ENCODE measurements at regions of chr15 and their contacts with region 1.

Region 1: DNA sequence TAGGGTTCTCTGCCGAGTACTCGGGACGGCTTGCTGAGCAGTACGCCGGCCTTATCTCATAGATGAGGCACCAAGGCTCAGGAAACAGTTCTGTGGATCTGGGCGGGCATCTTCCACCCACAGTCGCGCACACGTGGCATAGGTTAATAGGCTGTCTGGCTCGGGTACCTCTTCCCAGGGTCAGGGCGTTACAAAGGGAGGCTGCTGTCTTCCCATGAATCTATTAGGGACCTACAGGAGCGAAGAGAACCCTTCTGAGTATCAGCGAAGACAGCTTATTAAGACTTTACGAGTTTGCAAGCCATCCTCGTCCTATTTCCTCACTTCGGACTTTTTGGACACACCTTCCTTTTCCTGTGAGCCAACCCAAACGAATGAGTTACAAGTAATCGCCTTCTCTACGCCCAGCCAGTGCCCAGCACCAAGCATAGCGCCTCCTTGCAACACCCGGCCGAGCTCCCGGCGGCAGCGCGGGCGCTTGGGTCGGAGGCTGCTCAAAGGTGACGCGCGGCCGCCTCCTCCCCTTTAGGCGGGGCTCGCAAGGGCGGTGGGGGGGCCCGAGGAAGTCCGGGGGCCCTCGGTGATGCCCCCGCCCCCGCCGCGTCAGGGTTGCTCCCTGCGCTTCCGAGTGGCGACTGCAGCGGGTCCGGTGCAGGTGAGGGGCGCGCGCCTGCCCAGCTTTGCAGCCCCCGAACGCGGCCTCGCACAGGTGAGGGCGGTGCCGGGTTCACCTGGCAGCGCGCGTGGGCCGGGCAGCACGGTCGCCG is at the start of gene MCTP2:
- DNase-seq: peak; percentile 96
- H3K4me3 Mint-ChIP-seq: peak within 1 kb of the TSS; percentile 89
- H3K27ac Mint-ChIP-seq: peak within 1 kb of the TSS; percentile 97
- H3K4me1 Mint-ChIP-seq: peaks cover 69% of the 10 kb centered on the region
- H3K27me3 Mint-ChIP-seq: no peaks in the 10 kb centered on the region
- total RNA-seq, gene MCTP2: 49.8 and 58.9 TPM in 2 replicates

Region 2: DNA sequence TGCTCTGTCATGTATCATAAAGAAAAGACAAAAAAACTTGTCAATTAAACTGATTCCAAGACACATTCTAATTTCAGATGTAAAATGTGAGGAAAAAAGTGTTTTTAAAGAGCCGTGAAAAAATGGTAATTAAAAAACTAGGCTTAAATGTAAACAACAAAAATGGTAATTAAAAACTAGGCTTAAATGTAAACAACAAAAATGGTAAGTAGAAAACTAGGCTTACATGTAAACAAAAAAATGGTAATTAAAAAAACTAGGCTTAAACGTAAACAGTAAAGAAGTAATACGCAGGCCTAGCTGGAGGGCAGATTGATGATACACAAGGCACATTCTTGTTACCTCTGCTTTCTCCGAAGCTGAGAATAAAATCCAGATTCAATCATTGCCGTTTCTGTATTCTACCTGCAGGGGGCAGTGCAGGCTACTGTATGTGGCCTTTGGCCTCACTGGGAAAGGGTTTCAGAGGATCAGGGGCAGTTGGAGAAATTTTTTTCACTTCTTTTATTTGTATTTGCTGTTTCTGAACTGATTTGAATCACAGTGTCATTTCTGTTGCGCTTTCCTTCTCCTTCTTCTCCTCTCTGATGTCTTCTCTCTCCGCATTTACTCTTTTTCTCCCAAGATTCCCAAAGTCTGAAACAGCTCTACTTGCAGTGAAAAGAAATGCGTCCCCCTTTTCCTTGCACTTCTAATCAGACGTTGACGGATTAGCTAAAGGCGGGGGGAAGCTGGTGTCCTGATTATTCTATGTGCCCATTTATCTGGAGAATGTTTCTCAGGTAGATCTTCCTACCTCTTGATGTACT is 66.9 kb before region 1 on chr15:
- intact Hi-C with region 1: no loop called
- DNase-seq: peak; percentile 90
- H3K4me3 Mint-ChIP-seq: no peak overlapping the region
- H3K27ac Mint-ChIP-seq: no peak overlapping the region
- H3K4me1 Mint-ChIP-seq: peaks cover 5% of the 10 kb centered on the region
- H3K27me3 Mint-ChIP-seq: peaks cover 28% of the 10 kb centered on the region

Region 3: DNA sequence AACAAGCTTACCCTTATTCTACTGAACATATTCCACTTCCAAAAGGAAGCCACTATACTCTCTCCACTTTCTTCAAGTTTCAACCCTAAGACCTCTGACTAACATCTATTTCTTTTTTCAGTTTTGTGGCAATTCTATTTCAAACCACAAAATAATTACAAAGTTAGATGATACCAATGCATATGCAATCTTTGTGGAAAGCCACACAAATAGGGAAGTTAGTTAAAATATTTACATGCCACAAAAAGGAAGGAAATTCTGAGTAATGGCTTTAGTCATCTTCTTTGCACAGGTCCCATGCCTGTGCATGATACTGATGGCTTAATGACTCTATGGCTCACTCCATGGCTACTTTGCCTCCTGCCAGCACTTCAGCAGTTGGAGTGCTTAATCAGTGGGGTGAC is 56.7 kb before region 1 on chr15:
- intact Hi-C with region 1: loop called (anchors 1 kb)
- DNase-seq: peak; percentile 66
- H3K4me3 Mint-ChIP-seq: peak overlapping the region; percentile 28
- H3K27ac Mint-ChIP-seq: peak overlapping the region; percentile 8
- H3K4me1 Mint-ChIP-seq: peaks cover 39% of the 10 kb centered on the region
- H3K27me3 Mint-ChIP-seq: no peaks in the 10 kb centered on the region

Region 4: DNA sequence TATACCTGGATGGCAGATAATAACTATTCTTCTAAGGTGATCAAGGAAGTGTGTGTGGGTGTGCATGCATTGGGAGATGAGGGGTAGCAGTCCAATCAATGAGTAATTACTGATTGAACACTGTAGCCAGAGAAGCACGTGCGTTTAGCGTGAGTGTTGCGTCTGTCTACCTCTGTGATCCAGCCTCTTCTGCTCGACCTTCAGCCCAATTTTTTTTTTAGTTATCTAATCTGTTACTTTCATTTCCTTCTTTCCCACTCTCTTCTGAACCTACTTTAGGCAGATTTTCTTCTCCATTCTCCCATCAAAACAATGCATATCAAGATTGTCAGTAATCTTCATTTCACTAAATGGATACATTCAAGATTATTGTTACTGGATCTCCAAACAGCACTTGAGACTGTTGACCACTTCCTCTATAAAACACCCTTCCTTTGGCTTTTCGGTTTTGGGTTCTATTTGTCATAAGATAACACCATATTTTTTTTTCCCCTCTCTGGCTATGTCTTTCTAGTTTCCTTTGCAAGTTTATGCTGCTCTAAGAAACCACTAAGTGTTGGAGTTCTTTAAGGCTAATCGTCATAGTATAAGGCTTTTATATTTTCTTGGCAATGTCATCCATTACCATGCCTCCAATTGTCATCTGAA is 41.2 kb after region 1 on chr15:
- intact Hi-C with region 1: loop called (anchors 1 kb)
- DNase-seq: no peak
- H3K4me3 Mint-ChIP-seq: no peak overlapping the region
- H3K27ac Mint-ChIP-seq: no peak overlapping the region
- H3K4me1 Mint-ChIP-seq: peaks cover 17% of the 10 kb centered on the region
- H3K27me3 Mint-ChIP-seq: no peaks in the 10 kb centered on the region

Region 5: DNA sequence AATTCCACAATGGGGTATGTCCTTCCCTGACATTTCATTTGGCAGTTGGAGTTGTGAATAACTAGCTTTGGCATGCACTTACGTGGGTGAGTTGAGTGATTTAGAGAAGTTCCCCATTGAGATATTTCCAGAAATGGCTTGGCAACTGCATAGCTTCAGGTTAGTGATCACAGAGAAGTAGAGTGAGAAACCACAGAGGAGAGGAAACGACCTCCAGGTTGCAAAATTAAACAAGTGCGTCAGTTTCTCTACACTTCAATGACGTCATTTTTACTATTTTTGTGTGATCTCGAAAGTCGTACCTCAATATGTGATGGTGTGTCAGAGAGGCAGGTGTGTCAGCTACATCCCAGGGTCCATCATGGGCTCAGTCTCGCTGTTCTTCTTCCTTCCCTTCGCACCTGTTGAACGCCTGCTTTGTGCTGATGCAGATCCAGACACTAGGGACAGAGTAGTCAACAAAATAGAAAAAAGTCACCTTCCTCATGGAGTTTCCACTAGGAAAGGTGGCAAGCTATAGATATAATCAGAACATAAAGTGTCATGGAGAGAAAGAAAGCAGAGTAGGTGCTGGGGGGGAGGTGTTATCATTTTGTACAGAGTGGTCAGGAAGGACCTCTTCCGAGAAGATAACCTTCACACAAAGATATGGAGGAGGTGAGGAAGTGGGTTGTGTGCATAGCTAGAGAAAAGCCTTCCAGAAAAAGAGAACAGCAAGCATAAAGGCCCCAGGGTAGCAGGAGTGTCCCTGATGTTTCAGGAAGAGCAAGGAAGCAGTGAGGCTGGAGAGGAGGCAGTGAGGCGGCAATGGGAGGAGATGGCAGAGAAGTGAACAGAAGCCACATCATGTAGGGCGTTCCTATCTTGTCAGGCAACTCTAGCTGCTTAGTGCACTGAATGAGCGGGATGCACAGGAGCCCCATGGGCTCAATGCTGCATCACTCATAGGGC is 75.8 kb after region 1 on chr15:
- intact Hi-C with region 1: loop called (anchors 1 kb)
- DNase-seq: peak; percentile 74
- H3K4me3 Mint-ChIP-seq: peak overlapping the region; percentile 44
- H3K27ac Mint-ChIP-seq: peak overlapping the region; percentile 92
- H3K4me1 Mint-ChIP-seq: peaks cover 57% of the 10 kb centered on the region
- H3K27me3 Mint-ChIP-seq: no peaks in the 10 kb centered on the region

Region 6: GRCh38 chr15:94582369-94582768 is 351.2 kb after region 1 on chr15:
- intact Hi-C with region 1: loop called (anchors 10 kb)
- DNase-seq: peak; percentile 86
- H3K4me3 Mint-ChIP-seq: no peak overlapping the region
- H3K27ac Mint-ChIP-seq: no peak overlapping the region
- H3K4me1 Mint-ChIP-seq: peaks cover 44% of the 10 kb centered on the region
- H3K27me3 Mint-ChIP-seq: peaks cover 75% of the 10 kb centered on the region

Measured in activated CD4-positive, alpha-beta T cell treated with anti-CD3 and anti-CD28 coated beads, Interleukin-2, amount 10 ng/mL, durations not matched to agents 24 days and 14 days (primary cell).